ENCODE measurements at regions of chr10 and their contacts with region 1.

Region 1: DNA sequence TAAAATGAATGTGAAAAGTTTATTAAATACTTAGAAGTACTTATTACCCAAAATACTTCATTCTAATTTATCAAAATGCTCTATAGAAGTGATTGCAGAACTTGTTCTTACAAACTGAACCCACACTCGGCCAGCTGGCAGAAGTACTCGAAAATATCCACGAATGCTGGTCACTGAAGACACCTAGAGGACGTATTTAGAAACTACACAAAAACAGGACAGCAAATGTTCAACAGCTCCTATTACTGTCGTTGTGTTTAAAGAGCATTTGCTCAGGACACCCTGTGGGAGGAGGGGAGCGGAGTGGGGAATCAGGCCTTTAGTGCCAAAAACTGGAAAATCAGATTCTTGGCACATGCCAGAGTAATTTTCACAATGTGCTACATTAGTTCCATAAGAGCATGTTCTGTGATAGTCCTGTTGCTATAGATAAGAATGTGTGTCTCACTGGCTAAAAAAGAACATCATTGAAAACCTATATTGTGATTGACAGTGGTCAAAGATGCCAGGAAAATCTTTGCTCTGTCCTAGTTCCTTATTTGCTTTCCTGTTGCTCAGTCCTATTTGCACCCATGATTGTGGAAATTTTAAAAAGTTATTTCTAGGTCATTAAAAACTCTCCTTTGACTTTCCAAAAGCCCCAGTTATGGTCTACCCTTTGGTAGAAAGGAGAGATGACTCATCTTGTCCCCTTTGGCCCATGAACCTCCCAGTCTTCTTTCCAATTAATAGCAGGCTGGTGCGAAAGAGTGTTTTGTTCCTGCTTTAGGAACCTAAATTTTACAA is 49.0 kb upstream of the NRBF2 start:
- DNase-seq: peak; percentile 74
- ATAC-seq: peak; percentile 91

Region 2: GRCh38 chr10:62437696-62438095 is 646.4 kb before region 1 on chr10:
- intact Hi-C with region 1: loop called (anchors 5 kb)
- DNase-seq: no peak
- ATAC-seq: no peak

Region 3: GRCh38 chr10:62594093-62594520 is 490.0 kb before region 1 on chr10:
- intact Hi-C with region 1: loop called (anchors 1 kb)
- DNase-seq: no peak
- ATAC-seq: peak; percentile 89

Region 4: DNA sequence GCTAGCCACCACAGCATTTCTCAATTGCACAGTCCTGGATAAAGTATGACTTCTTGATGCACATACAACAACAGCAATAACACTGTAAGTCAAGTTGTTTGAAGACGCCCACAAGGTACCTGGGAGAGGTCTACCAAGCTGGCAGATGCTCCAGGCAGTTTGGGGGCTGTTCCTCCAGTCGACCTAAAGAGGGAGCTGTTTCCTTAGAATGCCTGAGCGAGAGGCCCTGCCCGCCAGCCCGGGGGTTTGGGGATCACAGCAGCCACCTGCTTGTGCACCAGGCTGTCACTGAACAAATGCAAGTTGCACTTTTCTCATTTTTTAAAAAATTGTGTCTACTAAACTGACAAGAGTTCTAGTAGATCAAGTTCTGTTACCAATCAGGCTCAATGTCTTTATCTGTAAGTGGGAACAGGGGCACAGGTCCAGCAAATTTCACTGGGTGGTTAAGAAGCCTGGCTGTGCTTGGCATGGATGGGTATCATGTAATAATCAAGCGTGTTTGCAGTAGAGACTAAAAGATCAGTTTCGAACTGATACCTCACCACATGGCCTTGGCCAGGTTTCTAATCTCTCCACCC is 473.4 kb before region 1 on chr10:
- intact Hi-C with region 1: loop called (anchors 5 kb)
- DNase-seq: peak; percentile 84
- ATAC-seq: peak; percentile 56

Region 5: DNA sequence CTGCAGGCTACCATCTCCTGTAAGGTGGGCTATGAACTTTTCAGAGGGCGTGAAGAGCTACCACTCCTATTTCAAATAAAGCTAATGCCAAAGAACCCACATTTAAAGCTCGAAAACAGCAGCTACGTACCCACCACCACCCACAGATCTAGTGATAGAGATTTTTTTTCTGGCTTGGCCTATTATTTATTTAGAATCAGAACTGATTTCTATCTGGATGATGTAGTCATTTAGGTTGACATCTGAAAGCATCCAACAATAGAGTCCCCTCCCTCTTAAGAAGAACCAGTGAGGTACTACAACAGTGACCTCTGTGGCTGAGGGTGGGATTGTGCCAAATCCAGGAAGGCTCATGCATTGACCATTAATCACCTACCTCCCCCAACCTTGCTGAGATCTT is 393.4 kb before region 1 on chr10:
- intact Hi-C with region 1: no loop called
- DNase-seq: no peak
- ATAC-seq: no peak

Measured in Right ventricle myocardium inferior (tissue), 1 donor.